Heart left ventricle (tissue), 16 donors: ENCODE measurements at regions of chr5 and their contacts with region 1.

Region 1: GRCh38 chr5:133868946-133869518 is 99.4 kb downstream of the C5orf15 start:
- DNase-seq: peak; percentile 66 to 80 (median 71)
- ATAC-seq: peak; percentile 47 to 88 (median 76)
- H3K4me3 ChIP-seq: peak overlapping the region in 11 of 12 donors; percentile 12 to 51 (median 40)
- H3K27ac ChIP-seq: peak overlapping the region in 6 of 12 donors; percentile 10 to 54 (median 24)
- H3K4me1 ChIP-seq: peaks cover 0 to 15% (median 7%) of the 10 kb centered on the region in 12 donors
- H3K27me3 ChIP-seq: peaks cover 0 to 4% (median 0%) of the 10 kb centered on the region in 9 donors
- CTCF ChIP-seq: peak; percentile 53 to 90 (median 82)
- POLR2A ChIP-seq: no peak

Region 2: GRCh38 chr5:133111299-133111698 is 757.7 kb before region 1 on chr5:
- intact Hi-C with region 1: loop called in 5 of 10 experiments (anchors 2 to 10 kb)
- DNase-seq: peak; percentile 75 to 90 (median 79)
- ATAC-seq: peak; percentile 39 to 80 (median 70)
- H3K4me3 ChIP-seq: no peak overlapping the region
- H3K27ac ChIP-seq: no peak overlapping the region
- H3K4me1 ChIP-seq: peaks cover 0 to 8% (median 0%) of the 10 kb centered on the region in 12 donors
- H3K27me3 ChIP-seq: no peaks in the 10 kb centered on the region
- CTCF ChIP-seq: peak; percentile 81 to 92 (median 88)
- POLR2A ChIP-seq: no peak

Region 3: GRCh38 chr5:133552931-133553525 is 316.0 kb before region 1 on chr5:
- intact Hi-C with region 1: loop called in 2 of 10 experiments (anchors 2 to 5 kb)
- DNase-seq: peak in 1 of 5 donors; percentile 69
- ATAC-seq: no peak
- H3K4me3 ChIP-seq: no peak overlapping the region
- H3K27ac ChIP-seq: no peak overlapping the region
- H3K4me1 ChIP-seq: no peaks in the 10 kb centered on the region
- H3K27me3 ChIP-seq: peaks cover 0 to 27% (median 0%) of the 10 kb centered on the region in 9 donors
- CTCF ChIP-seq: peak; percentile 29 to 70 (median 53)
- POLR2A ChIP-seq: no peak

Region 4: DNA sequence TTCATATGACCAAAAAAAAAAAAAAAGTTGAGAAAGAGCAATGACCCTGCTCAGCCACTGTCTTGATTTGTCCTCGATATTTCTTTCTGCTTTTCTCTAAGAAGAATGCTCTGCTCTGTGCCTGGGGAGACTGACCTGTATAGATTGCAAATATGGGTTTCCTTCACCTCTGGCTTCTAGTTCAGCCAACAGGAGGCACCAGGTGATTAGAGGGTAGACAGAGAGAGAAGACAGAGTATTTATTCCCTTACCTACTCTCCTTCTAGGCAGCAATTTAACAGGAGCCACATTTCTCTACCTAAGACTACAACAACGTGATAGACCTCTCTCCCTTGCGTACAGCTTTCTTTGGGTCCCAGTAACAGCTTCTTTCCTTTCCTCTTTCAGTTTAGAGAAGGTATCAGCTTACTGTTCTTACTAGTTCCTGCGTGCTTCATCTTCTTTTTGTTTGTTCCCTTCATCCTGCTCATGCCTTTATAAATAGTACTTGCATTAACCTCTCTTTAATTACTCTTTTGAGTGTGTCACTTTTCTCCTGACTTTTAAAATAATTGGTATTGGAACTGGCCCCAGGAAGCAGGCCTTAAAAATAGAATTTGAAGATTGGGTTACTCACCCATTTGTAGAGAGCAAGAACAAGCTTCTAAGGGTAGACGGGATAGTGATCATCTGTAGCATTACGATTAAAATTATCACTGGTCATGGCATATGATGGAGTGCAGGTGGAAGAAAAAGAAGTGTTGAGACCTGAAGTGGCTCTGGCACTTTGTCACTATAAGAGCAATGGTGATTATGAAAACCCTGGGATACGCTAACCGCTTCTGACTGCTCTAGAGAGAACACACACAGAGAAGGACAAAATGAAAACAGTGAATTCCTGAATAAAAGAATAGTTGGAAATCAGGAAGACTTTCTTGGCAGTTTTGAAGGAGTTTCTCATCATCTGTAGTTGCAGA is 95.5 kb before region 1 on chr5:
- intact Hi-C with region 1: loop called in 2 of 10 experiments (anchors 5 kb)
- DNase-seq: no peak
- ATAC-seq: peak in 3 of 4 donors; percentile 48 to 87 (median 84)
- H3K4me3 ChIP-seq: no peak overlapping the region
- H3K27ac ChIP-seq: no peak overlapping the region
- H3K4me1 ChIP-seq: no peaks in the 10 kb centered on the region
- H3K27me3 ChIP-seq: peaks cover 0 to 12% (median 0%) of the 10 kb centered on the region in 9 donors
- CTCF ChIP-seq: no peak
- POLR2A ChIP-seq: no peak

Region 5: DNA sequence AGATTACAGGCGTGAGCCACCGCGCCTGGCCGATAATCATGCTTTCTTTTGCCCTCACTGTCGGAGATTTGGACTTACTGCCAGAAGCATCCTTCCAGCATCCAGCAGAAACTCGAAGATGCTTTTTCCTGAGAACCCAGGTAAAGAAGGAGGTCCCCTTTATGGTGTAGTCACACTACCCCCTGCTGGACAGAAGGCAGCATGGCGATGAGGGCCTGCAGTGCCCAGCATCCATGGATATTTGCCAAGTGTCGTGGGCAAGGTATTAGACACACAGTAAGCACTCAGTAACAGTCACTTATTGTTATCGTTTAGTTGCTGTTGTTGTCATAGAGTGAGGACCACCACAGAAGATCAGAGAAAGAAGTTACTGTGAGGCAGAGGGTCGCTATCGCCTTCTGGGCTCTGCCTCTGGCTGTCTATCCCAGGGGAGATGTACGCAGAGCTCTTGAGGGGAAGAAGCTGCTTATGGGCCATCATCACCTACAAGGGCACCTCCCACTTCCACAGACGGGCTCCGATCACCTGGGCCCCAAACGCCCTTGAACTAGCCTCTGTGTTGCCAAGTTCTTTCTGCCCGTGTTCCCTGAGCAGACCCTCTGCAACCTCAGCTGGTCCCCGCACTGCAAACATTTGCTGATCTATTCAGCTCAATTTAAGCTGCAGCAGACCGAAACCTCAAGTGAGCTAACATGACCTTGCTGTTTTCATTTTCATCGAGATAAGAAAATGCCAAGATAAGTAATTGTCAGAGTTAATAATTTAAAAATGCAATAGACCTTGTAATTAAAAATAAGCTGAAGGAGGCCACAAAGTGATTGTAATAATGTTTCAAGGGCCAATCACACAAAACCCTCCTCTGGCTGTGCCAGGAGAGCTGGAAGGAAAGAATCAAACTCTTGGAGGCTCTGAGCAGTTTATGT is 75.5 kb after region 1 on chr5:
- intact Hi-C with region 1: loop called in 1 of 10 experiments (anchors 10 kb)
- DNase-seq: peak in 2 of 5 donors; percentile 35 to 41
- ATAC-seq: peak in 3 of 4 donors; percentile 61 to 70 (median 67)
- H3K4me3 ChIP-seq: no peak overlapping the region
- H3K27ac ChIP-seq: no peak overlapping the region
- H3K4me1 ChIP-seq: peaks cover 0 to 8% (median 0%) of the 10 kb centered on the region in 12 donors
- H3K27me3 ChIP-seq: no peaks in the 10 kb centered on the region
- CTCF ChIP-seq: peak; percentile 36 to 66 (median 52)
- POLR2A ChIP-seq: no peak